MCF 10A (cell line): ENCODE measurements at regions of chr11 and their contacts with region 1.

Region 1: GRCh38 chr11:88543902-88544655 is 206.5 kb upstream of the CTSC start:
- DNase-seq: peak; percentile 92
- H3K4me3 Mint-ChIP-seq: no peak overlapping the region
- H3K27ac Mint-ChIP-seq: peak overlapping the region; percentile 57
- H3K4me1 Mint-ChIP-seq: peaks cover 7% of the 10 kb centered on the region
- H3K27me3 Mint-ChIP-seq: no peaks in the 10 kb centered on the region
- CTCF ChIP-seq: peak; percentile 98

Region 2: DNA sequence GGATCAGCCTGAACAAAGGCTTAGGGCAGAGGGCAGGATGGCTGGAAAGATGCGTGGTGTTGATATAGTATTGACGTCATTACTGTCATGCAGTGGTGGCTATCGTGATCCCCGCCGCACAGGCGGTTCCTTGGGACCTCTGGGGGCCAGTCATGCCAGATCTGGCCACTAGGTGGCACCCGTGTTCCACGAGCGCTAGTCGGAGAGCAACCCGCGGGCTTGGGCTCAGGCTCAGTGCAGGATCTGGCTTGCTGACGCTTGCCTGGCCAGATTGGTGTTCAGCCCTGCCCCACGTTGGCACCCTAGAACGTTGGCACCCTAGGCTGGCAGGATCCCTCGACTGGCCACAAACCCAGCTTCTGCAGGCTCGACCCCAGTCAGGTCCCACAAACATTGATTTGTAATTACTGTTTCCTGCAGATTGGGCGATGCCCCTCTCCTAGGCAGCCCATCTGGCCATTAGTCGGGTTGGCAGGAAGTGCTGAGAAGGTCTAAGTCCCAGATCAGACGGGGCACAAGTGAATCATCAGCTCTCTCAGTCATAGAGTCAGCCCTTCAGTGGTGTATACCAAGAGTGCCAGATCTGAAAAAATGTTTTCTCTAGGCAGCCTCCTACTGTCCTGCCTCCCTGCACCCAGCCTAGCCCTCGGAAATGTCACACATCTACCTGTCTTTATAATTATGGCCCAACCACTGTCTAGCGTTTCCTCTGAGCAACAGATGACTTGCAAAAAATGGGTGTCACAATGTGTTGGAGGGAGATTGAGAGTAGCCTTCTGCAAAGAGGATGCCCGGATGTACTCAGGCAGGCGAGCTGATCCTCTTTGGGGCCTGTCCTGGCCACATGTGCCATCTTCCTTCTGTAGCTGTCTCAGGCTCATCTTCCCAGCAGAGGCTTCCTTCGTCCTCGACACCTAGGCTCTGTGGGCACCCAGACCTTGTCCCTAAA is 1191.0 kb before region 1 on chr11:
- CTCF ChIA-PET with region 1: interaction called, 4 read pairs
- POLR2A ChIA-PET with region 1: no interaction called
- intact Hi-C with region 1: loop called (anchors 2 kb)
- DNase-seq: peak; percentile 79
- H3K4me3 Mint-ChIP-seq: no peak overlapping the region
- H3K27ac Mint-ChIP-seq: no peak overlapping the region
- H3K4me1 Mint-ChIP-seq: peaks cover 6% of the 10 kb centered on the region
- H3K27me3 Mint-ChIP-seq: no peaks in the 10 kb centered on the region
- CTCF ChIP-seq: peak; percentile 98

Region 3: DNA sequence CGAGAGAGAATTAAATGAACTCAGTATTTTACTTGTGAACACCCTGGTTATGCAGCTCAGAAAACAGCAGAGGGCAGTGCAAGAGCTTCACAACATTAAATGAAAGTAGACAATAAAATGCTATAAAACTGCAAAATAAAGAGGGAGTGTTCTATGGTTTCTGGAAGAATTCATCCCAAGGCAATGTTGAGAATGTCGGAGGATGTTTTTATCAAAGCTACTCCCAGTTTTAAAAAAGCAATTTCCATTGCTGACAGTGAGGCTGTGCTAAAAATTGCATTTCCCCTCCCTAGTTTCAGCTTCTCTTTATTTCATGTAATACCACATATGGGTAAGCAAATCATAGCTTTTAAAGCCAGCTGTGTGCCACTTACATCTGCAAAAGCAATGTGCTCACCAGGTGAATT is 665.7 kb before region 1 on chr11:
- CTCF ChIA-PET with region 1: interaction called, 10 read pairs
- POLR2A ChIA-PET with region 1: no interaction called
- intact Hi-C with region 1: no loop called
- DNase-seq: peak; percentile 57
- H3K4me3 Mint-ChIP-seq: no peak overlapping the region
- H3K27ac Mint-ChIP-seq: no peak overlapping the region
- H3K4me1 Mint-ChIP-seq: peaks cover 6% of the 10 kb centered on the region
- H3K27me3 Mint-ChIP-seq: no peaks in the 10 kb centered on the region
- CTCF ChIP-seq: peak; percentile 56

Region 4: DNA sequence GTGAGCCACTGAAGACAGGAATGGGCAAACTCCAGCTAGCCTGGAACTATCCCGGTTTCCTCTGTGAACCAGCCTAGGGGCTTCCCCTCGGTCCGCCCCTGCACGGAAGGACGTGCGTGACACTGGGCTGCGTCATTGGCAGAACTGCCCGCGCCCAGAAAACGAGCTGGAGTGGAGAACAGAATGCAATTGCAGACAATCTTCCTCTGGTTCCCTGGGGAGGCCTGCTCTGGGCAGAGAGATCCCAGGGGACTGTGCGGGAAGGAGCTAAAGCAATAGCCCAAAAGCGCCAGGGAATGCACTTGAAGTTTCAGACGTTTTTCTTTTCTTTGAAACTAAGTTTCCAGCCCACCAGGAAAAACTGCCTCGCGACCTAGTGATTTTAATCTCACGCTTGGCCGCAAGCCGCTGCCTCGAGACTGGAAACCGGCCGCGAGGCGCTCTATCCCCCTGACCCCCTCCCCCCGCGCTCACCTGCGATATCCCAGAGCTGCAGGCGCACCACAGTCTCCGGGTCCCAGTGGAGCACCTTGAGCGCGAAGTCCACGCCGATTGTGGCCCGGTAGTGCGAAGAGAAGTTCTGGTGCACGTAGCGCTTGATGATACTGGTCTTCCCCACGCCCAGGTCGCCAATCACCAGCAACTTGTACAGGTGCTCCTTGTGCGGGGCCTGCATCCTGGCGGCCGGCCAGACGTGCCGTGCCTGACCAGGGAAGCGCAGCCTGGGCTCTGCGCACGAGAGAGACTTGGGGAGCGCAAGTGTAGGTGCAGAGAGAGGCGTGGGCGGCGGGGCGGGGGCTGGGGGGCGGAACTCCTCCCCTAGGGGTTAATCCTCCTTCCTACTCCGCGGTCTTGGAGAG is 369.1 kb before region 1 on chr11 and contains the start of gene RAB38:
- CTCF ChIA-PET with region 1: interaction called, 4 read pairs
- POLR2A ChIA-PET with region 1: interaction called, 11 read pairs
- intact Hi-C with region 1: loop called (anchors 5 kb)
- DNase-seq: peak; percentile 91
- H3K4me3 Mint-ChIP-seq: peak within 1 kb of the TSS; percentile 85
- H3K27ac Mint-ChIP-seq: peak within 1 kb of the TSS; percentile 91
- H3K4me1 Mint-ChIP-seq: peaks cover 40% of the 10 kb centered on the region
- H3K27me3 Mint-ChIP-seq: no peaks in the 10 kb centered on the region
- CTCF ChIP-seq: no peak
- total RNA-seq, gene RAB38: 77.7 and 80.9 TPM in 2 replicates

Region 5: GRCh38 chr11:88292171-88292843 is 251.8 kb before region 1 on chr11:
- CTCF ChIA-PET with region 1: interaction called, 23 read pairs
- POLR2A ChIA-PET with region 1: no interaction called
- intact Hi-C with region 1: loop called (anchors 1 kb)
- DNase-seq: peak; percentile 83
- H3K4me3 Mint-ChIP-seq: no peak overlapping the region
- H3K27ac Mint-ChIP-seq: no peak overlapping the region
- H3K4me1 Mint-ChIP-seq: peaks cover 5% of the 10 kb centered on the region
- H3K27me3 Mint-ChIP-seq: no peaks in the 10 kb centered on the region
- CTCF ChIP-seq: peak; percentile 16

Region 6: DNA sequence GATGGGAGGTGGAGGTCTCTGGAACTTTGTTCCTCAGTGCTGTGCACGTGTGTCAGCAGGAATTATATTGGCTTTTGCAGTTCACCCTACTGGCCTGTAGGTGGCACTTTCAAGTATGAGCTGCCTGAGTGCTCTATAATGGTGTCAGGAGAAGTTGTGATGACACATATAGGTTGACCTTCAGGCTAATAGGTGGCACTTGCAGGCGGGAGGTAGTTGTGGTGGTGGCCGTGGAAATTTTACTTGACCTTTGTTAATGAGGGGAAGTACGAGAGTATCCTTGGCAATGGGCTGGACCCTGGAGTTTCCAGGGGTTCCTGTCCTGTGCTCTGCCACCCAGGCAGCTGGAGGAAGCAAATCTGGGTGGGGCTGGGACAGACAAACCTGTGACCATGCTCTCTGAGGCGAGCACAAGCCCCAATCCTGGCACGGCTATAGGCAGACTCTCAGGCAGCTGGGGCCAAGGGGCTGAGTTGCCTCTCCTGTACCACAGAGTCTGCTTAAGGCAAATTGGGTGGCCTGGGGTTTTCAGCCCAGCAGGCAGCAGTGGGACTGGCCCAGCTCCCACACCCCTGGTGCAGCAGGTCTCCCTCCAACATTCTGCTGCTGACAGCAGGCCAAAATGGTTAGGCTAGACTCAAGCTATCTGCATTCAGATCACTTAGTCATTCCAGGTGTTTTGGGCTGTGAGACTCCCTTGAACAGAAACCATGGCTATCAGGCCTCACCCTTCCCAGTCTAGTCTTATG is 59.0 kb before region 1 on chr11:
- CTCF ChIA-PET with region 1: interaction called, 7 read pairs
- POLR2A ChIA-PET with region 1: no interaction called
- intact Hi-C with region 1: loop called (anchors 2 kb)
- DNase-seq: peak; percentile 63
- H3K4me3 Mint-ChIP-seq: no peak overlapping the region
- H3K27ac Mint-ChIP-seq: no peak overlapping the region
- H3K4me1 Mint-ChIP-seq: peaks cover 24% of the 10 kb centered on the region
- H3K27me3 Mint-ChIP-seq: no peaks in the 10 kb centered on the region
- CTCF ChIP-seq: peak; percentile 66

Region 7: DNA sequence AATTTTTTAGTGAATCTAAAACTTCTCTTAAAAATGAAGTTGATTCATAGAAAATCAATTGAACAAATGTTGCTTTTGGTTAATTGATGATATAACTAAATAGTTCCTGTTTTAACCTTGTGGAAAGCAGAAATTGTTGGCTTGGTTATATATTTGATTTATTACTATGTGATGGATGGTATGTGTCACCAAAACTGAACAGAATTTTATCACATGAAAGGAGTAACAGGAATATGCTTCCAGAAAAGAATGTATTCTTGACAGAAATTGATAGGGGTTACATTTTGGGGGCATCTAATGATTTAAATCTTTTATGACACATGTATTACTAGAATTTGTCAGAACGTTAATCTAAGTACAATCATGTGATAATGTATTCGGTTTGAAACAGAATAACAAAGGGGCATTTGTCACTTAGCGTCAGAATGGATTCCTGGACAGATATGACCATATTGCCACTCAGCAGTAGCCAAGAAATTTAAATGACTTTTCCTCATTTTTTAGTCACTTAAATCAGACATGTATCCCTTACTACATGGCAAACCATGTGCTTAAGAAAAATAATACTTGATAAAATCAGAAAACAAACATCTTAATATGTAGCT is 226.5 kb after region 1 on chr11:
- CTCF ChIA-PET with region 1: no interaction called
- POLR2A ChIA-PET with region 1: no interaction called
- intact Hi-C with region 1: no loop called
- DNase-seq: no peak
- H3K4me3 Mint-ChIP-seq: no peak overlapping the region
- H3K27ac Mint-ChIP-seq: no peak overlapping the region
- H3K4me1 Mint-ChIP-seq: no peaks in the 10 kb centered on the region
- H3K27me3 Mint-ChIP-seq: peaks cover 9% of the 10 kb centered on the region
- CTCF ChIP-seq: no peak